WTC11 (cell line): ENCODE measurements at regions of chr11 and their contacts with region 1.

Region 1: GRCh38 chr11:64448599-64449556 is 89.9 kb downstream of the RPS6KA4 start:
- DNase-seq: peak; percentile 92
- ATAC-seq: peak; percentile 83
- H3K4me3 Mint-ChIP-seq: peak overlapping the region; percentile 76
- H3K27ac Mint-ChIP-seq: no peak overlapping the region
- H3K4me1 Mint-ChIP-seq: peaks cover 18% of the 10 kb centered on the region
- H3K27me3 Mint-ChIP-seq: peaks cover 68% of the 10 kb centered on the region
- CTCF ChIP-seq: peak; percentile 69

Region 2: DNA sequence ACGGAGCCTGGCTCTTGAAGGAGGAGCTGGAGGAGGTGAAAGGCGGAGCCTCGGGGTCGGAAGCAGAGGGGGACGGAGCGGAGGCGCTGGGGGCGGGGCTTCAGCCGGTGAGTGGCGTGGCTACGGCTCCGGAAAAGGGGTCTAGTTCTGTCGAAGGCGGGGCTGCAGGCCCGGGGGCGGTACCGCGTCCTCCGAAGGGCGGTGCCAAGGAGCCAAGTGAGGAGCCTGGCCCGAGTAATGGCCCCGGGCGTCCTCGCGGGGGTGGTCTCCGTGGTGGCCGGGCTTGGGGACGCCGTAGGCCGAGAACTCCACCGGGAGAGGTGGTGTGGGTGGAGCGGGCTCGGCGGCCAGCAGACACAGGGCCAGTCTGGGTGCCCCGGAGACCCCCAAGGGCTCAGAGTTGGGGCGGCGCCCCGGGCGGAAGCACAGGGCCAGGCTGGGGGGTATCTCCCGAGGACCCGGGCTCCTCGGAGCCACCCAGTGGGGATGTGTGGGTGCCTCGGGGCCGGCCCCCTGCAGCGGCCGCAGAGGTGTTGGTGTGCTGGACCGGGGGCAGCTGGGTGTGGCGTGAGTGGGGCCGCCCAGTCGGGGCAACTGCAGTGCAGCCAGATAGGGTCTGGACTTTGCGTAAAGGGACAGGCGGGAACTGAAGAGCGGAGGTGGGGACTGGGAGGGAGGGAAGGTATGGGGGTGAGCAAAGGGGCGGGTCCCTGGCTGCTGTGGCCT is 207.3 kb before region 1 on chr11:
- CTCF ChIA-PET with region 1: no interaction called
- POLR2A ChIA-PET with region 1: no interaction called
- DNase-seq: peak; percentile 100
- ATAC-seq: peak; percentile 85
- H3K4me3 Mint-ChIP-seq: peak overlapping the region; percentile 88
- H3K27ac Mint-ChIP-seq: peak overlapping the region; percentile 86; the same call in 1 of the 2 replicates
- H3K4me1 Mint-ChIP-seq: peaks cover 30% of the 10 kb centered on the region
- H3K27me3 Mint-ChIP-seq: no peaks in the 10 kb centered on the region
- CTCF ChIP-seq: no peak

Region 3: DNA sequence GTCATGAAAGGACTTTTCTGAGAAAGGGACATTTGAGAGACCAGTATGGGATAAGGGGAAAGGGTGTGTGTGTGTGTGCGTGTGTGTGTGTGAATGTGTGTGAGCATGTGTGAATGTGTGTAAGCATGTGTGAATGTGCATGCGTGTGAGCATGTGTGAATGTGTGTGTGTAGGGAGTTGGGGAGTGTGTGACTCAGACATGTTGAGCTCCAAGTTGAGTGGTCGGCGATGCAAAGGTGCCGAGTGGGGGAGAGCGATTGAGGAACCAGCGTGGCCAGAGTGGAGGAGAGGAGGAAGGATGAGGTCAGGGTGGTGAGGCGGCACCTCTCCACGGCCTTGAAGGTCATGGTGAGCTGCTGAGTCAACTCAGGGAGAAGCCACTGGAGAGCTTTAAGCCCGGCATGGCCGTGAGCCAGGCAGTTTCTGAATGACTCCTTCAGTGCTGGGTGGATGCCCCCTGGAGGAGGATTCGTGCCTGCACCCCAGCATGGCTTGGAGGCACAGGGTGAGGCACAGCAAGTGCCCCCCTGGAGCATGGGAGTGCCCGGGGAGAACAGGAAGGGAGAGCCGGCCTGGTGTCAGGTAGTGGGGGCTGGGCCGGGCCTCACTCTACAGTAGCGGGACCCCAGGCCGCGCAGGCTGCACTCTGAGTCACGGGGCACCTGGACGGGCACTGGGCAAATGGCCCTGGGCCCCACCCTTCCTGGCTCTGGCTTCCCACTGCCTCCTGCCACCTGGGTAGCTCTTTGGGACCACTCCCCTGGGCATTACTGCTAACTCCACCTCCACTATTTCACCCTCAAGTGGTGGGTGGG is 117.1 kb before region 1 on chr11:
- CTCF ChIA-PET with region 1: interaction called, 15 read pairs
- POLR2A ChIA-PET with region 1: no interaction called
- DNase-seq: peak; percentile 65
- ATAC-seq: peak; percentile 79
- H3K4me3 Mint-ChIP-seq: no peak overlapping the region
- H3K27ac Mint-ChIP-seq: peak overlapping the region; percentile 11
- H3K4me1 Mint-ChIP-seq: peaks cover 10% of the 10 kb centered on the region
- H3K27me3 Mint-ChIP-seq: peaks cover 12% of the 10 kb centered on the region; the same call in 1 of the 2 replicates
- CTCF ChIP-seq: no peak

Region 4: DNA sequence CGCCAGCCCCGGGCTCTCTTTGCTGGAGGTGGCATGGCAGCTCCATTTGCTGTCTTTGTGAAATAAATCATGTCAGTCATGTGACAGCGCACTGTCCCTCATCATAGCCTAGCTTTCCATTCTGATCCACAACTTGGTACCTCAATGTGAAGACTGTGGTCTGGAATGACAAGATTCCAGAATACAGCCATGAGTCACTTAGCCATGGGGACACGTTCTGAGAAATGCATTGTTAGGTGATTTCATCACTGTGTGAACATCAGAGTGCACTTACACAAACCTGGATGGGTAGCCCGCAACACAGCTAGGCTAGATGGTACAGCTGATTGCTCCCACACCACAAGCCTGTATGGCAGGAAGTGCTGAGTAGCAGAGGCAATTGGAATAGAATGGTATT is 62.6 kb before region 1 on chr11:
- CTCF ChIA-PET with region 1: interaction called, 24 read pairs
- POLR2A ChIA-PET with region 1: no interaction called
- DNase-seq: no peak
- ATAC-seq: no peak
- H3K4me3 Mint-ChIP-seq: no peak overlapping the region
- H3K27ac Mint-ChIP-seq: no peak overlapping the region
- H3K4me1 Mint-ChIP-seq: peaks cover 3% of the 10 kb centered on the region
- H3K27me3 Mint-ChIP-seq: peaks cover 40% of the 10 kb centered on the region
- CTCF ChIP-seq: no peak

Region 5: GRCh38 chr11:64436000-64436399 is 12.9 kb before region 1 on chr11:
- CTCF ChIA-PET with region 1: interaction called, 34 read pairs
- POLR2A ChIA-PET with region 1: no interaction called
- DNase-seq: no peak
- ATAC-seq: no peak
- H3K4me3 Mint-ChIP-seq: no peak overlapping the region
- H3K27ac Mint-ChIP-seq: no peak overlapping the region
- H3K4me1 Mint-ChIP-seq: peaks cover 5% of the 10 kb centered on the region; the same call in 1 of the 2 replicates
- H3K27me3 Mint-ChIP-seq: peaks cover 50% of the 10 kb centered on the region
- CTCF ChIP-seq: no peak

Region 6: GRCh38 chr11:64516226-64516625 is 67.3 kb after region 1 on chr11:
- CTCF ChIA-PET with region 1: interaction called, 19 read pairs
- POLR2A ChIA-PET with region 1: no interaction called
- DNase-seq: no peak
- ATAC-seq: no peak
- H3K4me3 Mint-ChIP-seq: no peak overlapping the region
- H3K27ac Mint-ChIP-seq: no peak overlapping the region
- H3K4me1 Mint-ChIP-seq: no peaks in the 10 kb centered on the region
- H3K27me3 Mint-ChIP-seq: peaks cover 68% of the 10 kb centered on the region
- CTCF ChIP-seq: peak; percentile 44; the same call in 1 of the 2 replicates

Region 7: GRCh38 chr11:64608046-64608445 is 159.2 kb after region 1 on chr11:
- CTCF ChIA-PET with region 1: interaction called, 10 read pairs
- POLR2A ChIA-PET with region 1: no interaction called
- DNase-seq: no peak
- ATAC-seq: peak; percentile 38
- H3K4me3 Mint-ChIP-seq: no peak overlapping the region
- H3K27ac Mint-ChIP-seq: no peak overlapping the region
- H3K4me1 Mint-ChIP-seq: peaks cover 7% of the 10 kb centered on the region; the same call in 1 of the 2 replicates
- H3K27me3 Mint-ChIP-seq: no peaks in the 10 kb centered on the region; the same call in none of the 2 replicates
- CTCF ChIP-seq: no peak

Region 8: GRCh38 chr11:64971421-64972233 is 522.7 kb after region 1 on chr11 and contains the start of gene MAJIN:
- CTCF ChIA-PET with region 1: no interaction called
- POLR2A ChIA-PET with region 1: no interaction called
- DNase-seq: peak; percentile 81
- ATAC-seq: peak; percentile 81
- H3K4me3 Mint-ChIP-seq: no peak within 1 kb of the TSS
- H3K27ac Mint-ChIP-seq: no peak within 1 kb of the TSS
- H3K4me1 Mint-ChIP-seq: no peaks in the 10 kb centered on the region
- H3K27me3 Mint-ChIP-seq: peaks cover 56% of the 10 kb centered on the region
- CTCF ChIP-seq: no peak
- total RNA-seq, gene MAJIN: not detected in 3 replicates